ENCODE measurements at regions of chr15 and their contacts with region 1.

Region 1: DNA sequence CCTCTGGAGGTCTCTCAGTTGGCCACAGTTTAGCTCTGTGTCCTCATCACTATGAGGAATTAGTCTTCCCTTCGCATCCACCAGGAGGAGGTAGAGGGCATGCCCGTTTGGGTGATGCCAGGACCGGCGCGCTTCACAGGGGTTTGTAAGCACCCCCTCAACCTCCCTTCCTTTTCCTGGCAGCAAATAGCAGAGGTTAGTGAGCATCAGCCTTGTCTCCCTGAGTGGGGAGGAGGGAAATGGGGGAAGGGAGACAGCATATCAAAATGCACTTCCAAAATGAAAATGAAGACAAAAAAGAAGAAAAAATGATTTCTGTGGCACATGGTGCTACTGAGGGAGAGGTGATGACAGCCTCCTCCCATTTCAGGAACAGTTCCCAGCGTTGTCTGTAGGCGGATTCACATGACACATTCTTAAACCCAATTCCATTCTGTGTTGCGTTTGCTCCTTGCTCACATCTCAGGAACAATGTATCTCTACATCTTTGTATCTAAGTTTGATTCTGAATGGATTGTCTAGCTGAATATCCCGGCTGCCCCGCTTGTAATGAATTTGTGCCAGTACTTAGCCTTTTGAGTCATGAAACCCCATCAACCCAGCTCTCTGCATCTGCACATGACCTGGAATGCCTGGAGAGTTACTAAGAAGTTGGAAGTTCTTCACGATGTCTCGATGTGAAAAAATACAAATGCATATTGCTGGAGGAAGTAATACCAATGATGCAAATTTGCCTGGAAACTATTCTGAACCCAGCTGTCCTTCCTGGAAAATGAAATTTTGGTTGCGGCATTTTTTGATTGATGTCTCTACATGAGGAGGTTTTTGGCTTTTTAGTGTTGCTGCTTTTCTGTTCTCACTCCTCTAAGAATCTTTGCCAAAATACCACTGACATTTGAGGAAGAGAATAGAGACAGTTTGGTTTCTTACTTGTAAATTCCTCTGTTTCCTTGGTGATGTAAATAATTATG is 45.2 kb downstream of the TYRO3 start:
- DNase-seq: no peak
- H3K4me3 ChIP-seq: peak overlapping the region in 1 of 2 donors; percentile 21
- H3K27ac ChIP-seq: peak overlapping the region; percentile 42
- H3K4me1 ChIP-seq: no peaks in the 10 kb centered on the region
- H3K27me3 ChIP-seq: no peaks in the 10 kb centered on the region
- CTCF ChIP-seq: peak in 2 of 3 experiments; percentile 63 to 77
- POLR2A ChIP-seq: no peak

Region 2: DNA sequence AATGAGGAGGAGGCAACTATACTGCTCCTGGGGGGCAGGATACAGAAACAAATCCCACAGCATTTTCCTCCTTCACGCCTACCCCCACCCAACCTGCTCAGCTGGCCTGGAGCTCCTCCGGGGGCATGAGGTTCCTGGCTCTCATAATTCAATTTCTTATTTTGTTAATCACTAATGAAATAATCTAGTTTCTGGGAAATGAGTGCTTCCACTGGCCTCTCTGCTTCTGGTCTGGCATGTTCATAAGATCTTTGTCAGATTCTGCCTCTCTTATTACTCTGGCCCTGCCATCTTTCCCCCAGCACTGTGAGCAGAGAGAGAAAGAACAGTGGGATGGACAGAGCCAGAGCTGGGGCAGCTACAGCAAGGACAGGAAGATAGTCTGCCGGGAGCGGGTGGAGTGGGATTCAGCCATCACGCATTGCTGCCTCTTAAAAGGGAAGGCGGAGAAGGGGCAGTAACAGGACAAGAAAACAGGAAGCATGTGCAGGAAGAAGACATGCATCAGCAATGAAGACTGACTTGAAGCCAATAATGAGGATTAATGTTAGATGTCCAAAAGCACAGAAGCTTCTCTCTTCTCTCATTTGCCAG is 73.8 kb before region 1 on chr15:
- intact Hi-C with region 1: no loop called
- DNase-seq: no peak
- H3K4me3 ChIP-seq: no peak overlapping the region
- H3K27ac ChIP-seq: no peak overlapping the region
- H3K4me1 ChIP-seq: no peaks in the 10 kb centered on the region
- H3K27me3 ChIP-seq: no peaks in the 10 kb centered on the region
- CTCF ChIP-seq: no peak
- POLR2A ChIP-seq: no peak

Region 3: GRCh38 chr15:41557673-41558399 is 46.4 kb before region 1 on chr15:
- intact Hi-C with region 1: loop called (anchors 10 kb)
- DNase-seq: peak in 1 of 2 donors; percentile 89
- H3K4me3 ChIP-seq: peak overlapping the region; percentile 58 to 99
- H3K27ac ChIP-seq: peak overlapping the region; percentile 51
- H3K4me1 ChIP-seq: peaks cover 27% of the 10 kb centered on the region
- H3K27me3 ChIP-seq: no peaks in the 10 kb centered on the region
- CTCF ChIP-seq: peak; percentile 49 to 64 (median 53)
- POLR2A ChIP-seq: no peak

Region 4: GRCh38 chr15:41811432-41812195 is 207.4 kb after region 1 on chr15:
- intact Hi-C with region 1: loop called (anchors 5 kb)
- DNase-seq: no peak
- H3K4me3 ChIP-seq: no peak overlapping the region
- H3K27ac ChIP-seq: no peak overlapping the region
- H3K4me1 ChIP-seq: peaks cover 9% of the 10 kb centered on the region
- H3K27me3 ChIP-seq: no peaks in the 10 kb centered on the region
- CTCF ChIP-seq: peak; percentile 74 to 91 (median 82)
- POLR2A ChIP-seq: no peak